ENCODE measurements at regions of chr17 and their contacts with region 1.

Region 1: GRCh38 chr17:67221062-67221998 is 23.7 kb downstream of the HELZ start:
- DNase-seq: peak; percentile 69

Region 2: GRCh38 chr17:67121316-67121887 is 99.9 kb before region 1 on chr17:
- in situ Hi-C with region 1: no loop called
- DNase-seq: no peak

Region 3: GRCh38 chr17:67322042-67322787 is 100.9 kb after region 1 on chr17:
- in situ Hi-C with region 1: loop called (anchors 25 kb)
- DNase-seq: no peak

Region 4: GRCh38 chr17:67335329-67335835 is 114.1 kb after region 1 on chr17:
- in situ Hi-C with region 1: no loop called
- DNase-seq: no peak

Measured in SK-MEL-5 (cell line).